Activated CD4-positive, alpha-beta memory T cell treated with anti-CD3 and anti-CD28 coated beads for 36 hours (primary cell): ENCODE measurements at regions of chr7 and their contacts with region 1.

Region 1: GRCh38 chr7:100726996-100727761 is 6.2 kb upstream of the ZAN start:
- DNase-seq: no peak
- H3K4me3 Mint-ChIP-seq: no peak overlapping the region
- H3K27ac Mint-ChIP-seq: no peak overlapping the region
- H3K4me1 Mint-ChIP-seq: peaks cover 2% of the 10 kb centered on the region
- H3K27me3 Mint-ChIP-seq: peaks cover 16% of the 10 kb centered on the region

Region 2: GRCh38 chr7:100745184-100745583 is 18.0 kb after region 1 on chr7:
- CTCF ChIA-PET with region 1: interaction called, 8 read pairs
- POLR2A ChIA-PET with region 1: no interaction called
- intact Hi-C with region 1: loop called (anchors 2 kb)
- DNase-seq: peak; percentile 53
- H3K4me3 Mint-ChIP-seq: peak overlapping the region; percentile 73
- H3K27ac Mint-ChIP-seq: no peak overlapping the region
- H3K4me1 Mint-ChIP-seq: peaks cover 4% of the 10 kb centered on the region
- H3K27me3 Mint-ChIP-seq: peaks cover 23% of the 10 kb centered on the region

Region 3: DNA sequence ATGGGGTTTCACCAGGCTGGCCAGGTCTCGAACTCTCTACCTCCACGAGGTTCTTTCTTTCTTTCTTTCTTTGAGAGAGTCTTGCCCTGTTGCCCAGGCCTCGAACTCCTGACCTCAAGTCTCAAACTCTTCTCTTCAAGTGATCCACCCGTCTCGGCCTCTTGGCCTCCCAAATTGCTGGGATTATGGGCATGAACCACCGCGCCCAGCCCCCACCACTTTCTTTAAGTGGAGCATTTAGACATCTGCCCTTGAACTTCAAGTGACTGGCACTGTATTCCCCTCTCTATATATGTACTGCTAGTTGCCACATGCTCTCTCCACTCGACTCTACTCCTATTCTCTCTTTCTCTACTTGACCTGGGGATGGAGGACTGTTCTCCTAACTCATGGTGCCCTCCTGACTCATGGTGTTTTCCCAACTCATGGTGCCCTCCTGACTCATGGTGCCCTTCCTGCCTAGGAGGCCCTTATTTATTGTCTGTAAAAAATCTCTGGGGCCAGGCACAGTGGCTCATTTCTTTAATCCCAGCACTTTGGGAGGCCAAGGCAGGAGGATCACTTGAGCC is 187.8 kb after region 1 on chr7:
- CTCF ChIA-PET with region 1: no interaction called
- POLR2A ChIA-PET with region 1: no interaction called
- intact Hi-C with region 1: no loop called
- DNase-seq: peak; percentile 27
- H3K4me3 Mint-ChIP-seq: no peak overlapping the region
- H3K27ac Mint-ChIP-seq: no peak overlapping the region
- H3K4me1 Mint-ChIP-seq: peaks cover 4% of the 10 kb centered on the region
- H3K27me3 Mint-ChIP-seq: peaks cover 3% of the 10 kb centered on the region